Adrenal gland (tissue), 19 donors: ENCODE measurements at regions of chr2 and their contacts with region 1.

Region 1: GRCh38 chr2:65420712-65421431 is 11.5 kb downstream of the SPRED2 start:
- DNase-seq: peak in 1 of 7 donors; percentile 25
- H3K4me3 ChIP-seq: no peak overlapping the region
- H3K27ac ChIP-seq: no peak overlapping the region
- H3K4me1 ChIP-seq: peaks cover 0 to 17% of the 10 kb centered on the region in 2 donors
- H3K27me3 ChIP-seq: no peaks in the 10 kb centered on the region
- CTCF ChIP-seq: no peak
- POLR2A ChIP-seq: no peak

Region 2: GRCh38 chr2:65278531-65278981 is 142.3 kb before region 1 on chr2:
- intact Hi-C with region 1: loop called in 1 of 2 experiments (anchors 10 kb)
- DNase-seq: no peak
- H3K4me3 ChIP-seq: no peak overlapping the region
- H3K27ac ChIP-seq: no peak overlapping the region
- H3K4me1 ChIP-seq: peaks cover 11 to 22% of the 10 kb centered on the region in 2 donors
- H3K27me3 ChIP-seq: no peaks in the 10 kb centered on the region
- CTCF ChIP-seq: no peak
- POLR2A ChIP-seq: no peak